ENCODE measurements at regions of chr7 and their contacts with region 1.

Region 1: GRCh38 chr7:155702616-155703015 is 58.2 kb downstream of the RBM33 start:
- DNase-seq: no peak
- ATAC-seq: no peak
- H3K4me3 ChIP-seq: no peak overlapping the region
- H3K4me3 Mint-ChIP-seq: no peak overlapping the region
- H3K27ac ChIP-seq: no peak overlapping the region
- H3K27ac Mint-ChIP-seq: peak overlapping the region in 4 of 9 donors; percentile 16 to 62 (median 24)
- H3K4me1 ChIP-seq: no peaks in the 10 kb centered on the region
- H3K4me1 Mint-ChIP-seq: peaks cover 14 to 37% (median 27%) of the 10 kb centered on the region in 7 donors
- H3K27me3 ChIP-seq: no peaks in the 10 kb centered on the region
- H3K27me3 Mint-ChIP-seq: no peaks in the 10 kb centered on the region

Region 2: GRCh38 chr7:155653803-155654202 is 48.8 kb before region 1 on chr7:
- CTCF ChIA-PET with region 1: no interaction called
- POLR2A ChIA-PET with region 1: no interaction called
- intact Hi-C with region 1: loop called in 1 of 2 experiments (anchors 10 kb)
- DNase-seq: no peak
- ATAC-seq: peak; percentile 22
- H3K4me3 ChIP-seq: no peak overlapping the region
- H3K4me3 Mint-ChIP-seq: peak overlapping the region in 9 of 10 donors; percentile 29 to 70 (median 42)
- H3K27ac ChIP-seq: no peak overlapping the region
- H3K27ac Mint-ChIP-seq: peak overlapping the region in 3 of 9 donors; percentile 12 to 63 (median 23)
- H3K4me1 ChIP-seq: peaks cover 23 to 36% of the 10 kb centered on the region in 2 donors
- H3K4me1 Mint-ChIP-seq: peaks cover 53 to 99% (median 95%) of the 10 kb centered on the region in 7 donors
- H3K27me3 ChIP-seq: no peaks in the 10 kb centered on the region
- H3K27me3 Mint-ChIP-seq: no peaks in the 10 kb centered on the region

Measured in naive thymus-derived CD4-positive, alpha-beta T cell (primary cell).